ENCODE measurements at regions of chr2 and their contacts with region 1.

Region 1: DNA sequence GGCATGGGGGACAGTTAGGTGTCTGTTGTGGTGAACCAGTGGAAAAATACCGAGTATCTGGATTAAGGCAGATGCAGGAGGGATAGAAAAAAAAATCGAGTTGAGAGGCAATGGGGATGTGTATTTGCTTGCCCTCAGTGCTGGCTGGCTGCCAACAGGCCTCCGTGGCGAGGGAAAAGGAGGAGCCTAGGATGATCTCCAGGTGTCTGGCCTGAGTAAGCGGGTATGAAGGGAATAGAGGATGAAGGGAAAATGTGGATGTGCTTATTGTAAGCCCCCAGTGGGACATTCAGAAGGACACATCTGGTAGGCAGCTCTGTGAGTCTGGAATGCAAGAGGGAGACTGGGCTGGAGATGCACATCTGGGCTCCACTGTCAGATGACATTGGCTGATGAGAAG is 22.8 kb downstream of the KCNS3 start:
- DNase-seq: peak; percentile 75
- H3K27ac ChIP-seq: peak overlapping the region; percentile 65
- CTCF ChIP-seq: no peak

Region 2: DNA sequence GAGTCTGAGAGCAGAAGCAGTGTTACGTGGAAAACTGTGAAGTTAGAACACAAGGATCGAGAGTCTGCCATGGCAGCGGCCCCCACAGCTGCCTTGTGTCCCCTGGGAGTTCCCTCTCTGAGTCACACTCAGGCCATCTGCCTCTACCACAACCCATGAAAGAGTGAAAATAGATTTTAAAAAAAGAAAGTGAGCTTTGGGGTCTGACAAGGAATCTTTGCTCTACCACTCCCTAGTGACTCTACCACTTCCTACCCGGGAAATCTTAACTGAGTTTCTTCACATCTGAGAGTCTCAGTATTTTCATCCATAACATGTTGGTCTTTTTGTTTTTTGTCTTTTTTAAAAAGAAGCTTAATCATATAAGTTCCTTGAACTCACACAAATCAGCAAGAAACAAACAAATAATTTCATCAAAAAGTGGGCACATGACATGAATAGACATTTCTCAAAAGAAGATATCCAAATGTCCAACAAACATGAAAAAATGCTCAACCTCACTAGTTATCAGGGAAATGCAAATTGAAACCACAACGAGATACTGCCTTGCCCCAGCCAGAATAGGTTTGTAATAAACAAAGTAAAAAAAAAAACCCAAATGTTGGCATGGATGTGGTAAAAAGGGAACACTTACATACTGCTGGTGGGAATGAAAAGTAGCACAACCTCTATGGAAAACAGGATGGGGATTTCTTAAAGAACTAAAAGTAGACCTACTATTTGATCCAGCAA is 87.3 kb before region 1 on chr2:
- CTCF ChIA-PET with region 1: no interaction called
- POLR2A ChIA-PET with region 1: no interaction called
- DNase-seq: no peak
- H3K27ac ChIP-seq: peak overlapping the region; percentile 94
- CTCF ChIP-seq: no peak

Region 3: DNA sequence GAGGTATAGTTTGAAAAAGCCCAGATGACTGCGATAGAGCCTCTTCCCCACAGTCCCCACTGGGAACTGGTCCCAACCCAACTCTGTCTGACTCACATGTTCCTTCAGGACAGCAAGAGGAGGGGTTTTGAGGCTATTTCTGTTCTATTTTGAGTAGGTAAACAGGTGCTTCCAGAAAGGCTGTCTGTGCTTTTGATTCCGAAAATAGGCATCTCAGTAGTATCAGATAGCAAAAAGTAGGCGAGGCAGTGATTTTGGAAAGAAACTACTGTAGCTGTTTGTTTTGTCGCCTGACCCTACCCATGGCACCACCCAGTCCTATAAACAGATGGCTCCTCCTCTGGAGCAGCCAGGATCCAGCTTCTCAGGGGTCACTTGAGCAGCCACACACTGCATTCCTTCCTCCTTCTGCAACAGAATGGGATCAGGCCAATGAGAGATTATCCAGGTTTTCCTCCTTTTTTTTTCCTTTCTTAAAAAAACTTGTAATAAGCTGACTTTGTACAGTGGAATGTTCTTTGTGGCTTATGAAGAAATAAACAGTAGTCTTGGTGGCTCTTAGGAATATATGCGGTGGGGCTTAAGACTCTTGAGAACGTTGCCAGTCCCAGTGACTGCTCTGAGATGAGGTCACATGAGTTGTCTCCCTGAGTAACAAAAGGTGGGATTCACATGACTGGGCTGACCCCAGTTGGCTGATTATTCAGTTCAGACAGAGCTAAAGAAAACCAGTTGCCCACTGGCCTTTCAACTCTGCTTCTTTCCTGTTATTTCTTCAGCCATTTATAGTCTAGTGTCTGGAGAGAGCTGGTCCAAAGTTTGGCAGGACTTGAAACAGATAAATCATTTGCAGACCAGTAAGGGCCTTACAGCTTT is 75.9 kb after region 1 on chr2:
- CTCF ChIA-PET with region 1: no interaction called
- POLR2A ChIA-PET with region 1: no interaction called
- DNase-seq: peak; percentile 21
- H3K27ac ChIP-seq: no peak overlapping the region
- CTCF ChIP-seq: no peak

Region 4: GRCh38 chr2:18605115-18605514 is 703.9 kb after region 1 on chr2:
- CTCF ChIA-PET with region 1: no interaction called
- POLR2A ChIA-PET with region 1: interaction called, 12 read pairs
- DNase-seq: no peak
- H3K27ac ChIP-seq: no peak overlapping the region
- CTCF ChIP-seq: no peak